ENCODE measurements at regions of chr3 and their contacts with region 1.

Region 1: DNA sequence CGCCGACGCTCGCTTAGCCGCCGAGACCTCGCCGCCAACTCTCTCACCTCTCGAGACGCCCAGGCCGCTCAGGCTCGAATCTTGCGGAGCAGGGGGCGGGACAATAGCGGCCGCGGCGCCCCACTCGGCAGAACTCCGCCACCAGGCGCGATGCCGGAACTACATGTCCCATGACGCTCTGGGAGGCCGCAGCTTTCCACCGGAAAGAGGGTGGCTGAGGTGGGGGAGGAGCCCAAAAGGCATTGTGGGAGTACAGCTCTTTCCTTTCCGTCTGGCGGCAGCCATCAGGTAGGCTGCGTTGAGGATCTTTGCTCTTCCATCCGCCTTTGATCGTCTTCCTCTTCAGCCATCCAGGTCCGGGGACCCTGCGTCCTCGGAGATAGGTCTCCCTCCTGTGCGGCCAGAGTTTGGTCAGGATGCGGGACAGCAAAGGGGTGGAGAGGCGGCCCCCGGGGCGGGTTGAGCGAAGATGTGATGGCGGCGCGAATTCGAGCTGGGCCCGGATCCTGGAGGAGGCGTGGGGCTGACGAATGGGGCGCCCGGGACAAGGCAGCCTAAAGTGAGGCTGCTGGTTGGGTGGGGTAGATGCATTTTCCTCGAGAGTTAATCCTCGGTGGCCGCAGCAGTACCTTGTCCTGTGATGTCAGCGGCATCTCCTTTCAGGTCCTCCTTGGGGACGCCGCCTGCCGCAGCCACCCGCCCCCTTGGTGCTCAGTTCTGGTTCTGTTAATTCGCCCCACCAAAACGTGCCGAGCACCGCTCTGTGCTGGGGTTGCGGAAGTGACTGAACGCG is at the starts of genes NKIRAS1 and RPL15:
- DNase-seq: peak; percentile 98
- ATAC-seq: peak; percentile 93
- H3K4me3 Mint-ChIP-seq: peak within 1 kb of the TSS; percentile 99
- H3K27ac Mint-ChIP-seq: peak within 1 kb of the TSS; percentile 95
- H3K4me1 Mint-ChIP-seq: peaks cover 41% of the 10 kb centered on the region
- H3K27me3 Mint-ChIP-seq: no peaks in the 10 kb centered on the region
- total RNA-seq, gene NKIRAS1: 3.4 to 3.8 TPM
- total RNA-seq, gene RPL15: 1,249 to 1,693 TPM

Region 2: DNA sequence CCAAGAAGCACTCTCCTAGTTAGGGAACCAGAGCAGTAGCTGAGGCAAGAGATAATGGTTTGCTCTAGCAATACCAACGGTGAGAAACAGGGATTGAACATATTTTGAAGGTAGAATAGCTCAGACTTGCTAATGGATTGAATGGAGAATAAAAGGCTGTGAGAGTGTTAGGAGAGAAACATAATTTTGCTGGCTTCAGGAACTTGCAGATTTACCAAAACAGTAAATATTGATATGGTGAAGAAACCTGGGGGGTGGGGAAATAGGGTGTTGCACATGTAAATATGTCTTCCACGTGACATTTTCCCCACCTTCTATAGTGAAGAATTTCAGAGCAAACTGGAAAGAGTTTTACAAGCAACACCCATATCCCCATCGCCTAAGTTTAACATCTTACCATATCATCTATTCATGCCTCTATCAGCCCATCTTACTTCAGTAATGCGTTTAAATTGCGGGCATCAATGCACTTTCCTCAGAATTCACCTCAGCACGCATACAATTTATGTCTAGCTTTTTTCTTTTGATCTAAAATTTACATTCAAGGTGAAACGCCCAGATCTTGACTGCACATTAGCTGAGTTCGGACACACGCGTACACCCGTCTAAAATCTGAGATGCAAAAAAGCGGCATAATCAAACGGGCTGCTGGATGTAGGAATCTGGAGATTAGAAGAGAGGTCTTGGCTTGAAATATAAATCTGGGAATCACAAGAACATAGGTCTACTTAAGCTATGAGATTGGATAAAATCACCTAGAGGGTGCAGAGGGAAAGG is 27.1 kb after region 1 on chr3:
- CTCF ChIA-PET with region 1: interaction called, 10 read pairs
- DNase-seq: no peak
- ATAC-seq: no peak
- H3K4me3 Mint-ChIP-seq: peak overlapping the region; percentile 76
- H3K27ac Mint-ChIP-seq: peak overlapping the region; percentile 16
- H3K4me1 Mint-ChIP-seq: peaks cover 14% of the 10 kb centered on the region
- H3K27me3 Mint-ChIP-seq: peaks cover 28% of the 10 kb centered on the region